ENCODE measurements at regions of chr19 and their contacts with region 1.

Region 1: DNA sequence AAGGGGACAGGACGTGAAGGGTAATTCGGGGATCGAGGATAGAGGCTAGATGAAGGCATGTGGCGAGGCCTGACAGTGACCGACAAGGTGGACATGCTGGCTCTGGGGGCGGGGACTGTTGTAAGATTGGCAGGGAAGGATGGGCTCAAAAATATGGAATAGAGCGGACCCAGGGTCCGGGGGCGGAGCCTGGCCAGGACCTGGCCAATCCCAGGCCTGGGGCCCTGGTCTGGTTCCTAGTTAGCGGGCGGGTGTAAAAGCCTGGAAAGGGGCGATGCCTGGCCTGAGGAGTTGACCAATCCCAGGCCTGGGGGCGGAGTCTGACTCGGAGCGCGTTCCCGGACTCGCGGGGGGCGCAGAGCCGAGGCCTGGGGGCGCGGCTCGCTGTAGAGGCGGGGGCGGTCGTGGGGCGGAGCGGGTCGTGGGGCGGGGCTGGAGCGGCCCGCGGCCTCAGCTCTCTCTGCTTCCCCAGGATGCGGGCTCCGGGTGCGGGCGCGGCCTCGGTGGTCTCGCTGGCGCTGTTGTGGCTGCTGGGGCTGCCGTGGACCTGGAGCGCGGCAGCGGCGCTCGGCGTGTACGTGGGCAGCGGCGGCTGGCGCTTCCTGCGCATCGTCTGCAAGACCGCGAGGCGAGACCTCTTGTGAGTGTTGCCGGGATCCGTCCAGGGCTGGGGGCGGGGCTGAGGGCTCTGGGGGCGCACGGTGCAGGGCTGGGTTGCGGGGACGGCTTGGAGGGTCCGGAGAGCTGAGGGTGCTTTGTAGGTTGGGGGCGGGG is at the start of gene SLC27A1:
- DNase-seq: peak; percentile 94
- ATAC-seq: peak; percentile 78
- H3K4me3 ChIP-seq: peak within 1 kb of the TSS; percentile 30 to 81 (median 76)
- H3K4me3 Mint-ChIP-seq: peak within 1 kb of the TSS; percentile 92
- H3K27ac ChIP-seq: peak within 1 kb of the TSS; percentile 59 to 62
- H3K27ac Mint-ChIP-seq: peak within 1 kb of the TSS; percentile 90
- H3K4me1 ChIP-seq: peaks cover 6 to 22% of the 10 kb centered on the region in 2 donors
- H3K4me1 Mint-ChIP-seq: peaks cover 28% of the 10 kb centered on the region
- H3K27me3 ChIP-seq: no peaks in the 10 kb centered on the region
- H3K27me3 Mint-ChIP-seq: no peaks in the 10 kb centered on the region
- CTCF ChIP-seq: no peak
- total RNA-seq, gene SLC27A1: 9.5 and 11.5 TPM in 2 replicates

Region 2: DNA sequence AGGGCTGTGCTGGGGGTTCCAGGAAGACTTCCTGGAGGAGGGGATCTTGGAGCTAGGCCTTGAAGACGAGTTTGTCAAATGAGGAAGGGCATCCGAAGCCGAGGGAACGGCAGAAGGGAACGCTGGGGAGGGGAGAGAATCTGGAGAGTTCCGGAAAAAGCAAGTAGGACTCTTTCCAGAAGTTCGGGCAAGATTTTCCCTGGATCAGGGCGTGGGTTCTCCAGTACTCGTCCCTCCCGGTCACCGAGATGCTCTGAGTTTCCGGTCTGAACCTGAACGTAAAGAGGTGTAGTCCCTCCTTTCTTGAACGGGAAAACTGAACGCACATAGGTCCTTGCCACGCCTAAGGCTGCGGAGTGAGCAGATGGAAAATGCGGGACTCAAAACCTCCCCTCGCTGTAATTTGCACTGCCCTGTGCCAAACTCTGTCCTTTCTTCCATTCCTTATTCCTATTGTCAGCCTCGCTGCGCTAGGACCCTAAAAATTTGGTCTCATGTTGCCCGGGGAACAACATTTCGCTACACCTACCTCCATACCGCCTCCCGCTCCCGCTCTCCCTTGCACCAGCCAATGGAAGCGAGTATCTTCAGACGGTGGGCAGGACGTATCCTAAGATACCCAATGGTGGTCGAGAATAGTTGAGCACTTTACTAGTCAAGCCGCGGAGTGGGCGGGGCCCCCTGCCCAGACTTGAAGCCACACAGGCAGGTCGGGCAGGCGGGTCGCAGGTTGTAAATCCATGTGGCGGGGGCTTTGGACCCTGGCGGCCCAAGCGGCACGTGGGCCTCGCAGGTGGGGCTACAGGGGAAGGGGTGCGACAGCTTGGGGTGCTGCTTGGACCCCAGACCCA is 133.2 kb before region 1 on chr19 and contains the start of gene GTPBP3:
- CTCF ChIA-PET with region 1: no interaction called
- POLR2A ChIA-PET with region 1: no interaction called
- intact Hi-C with region 1: loop called (anchors 1 kb)
- DNase-seq: peak; percentile 97
- ATAC-seq: peak; percentile 88
- H3K4me3 ChIP-seq: peak within 1 kb of the TSS; percentile 55 to 97 (median 85)
- H3K4me3 Mint-ChIP-seq: peak within 1 kb of the TSS; percentile 92
- H3K27ac ChIP-seq: peak within 1 kb of the TSS; percentile 39 to 85
- H3K27ac Mint-ChIP-seq: peak within 1 kb of the TSS; percentile 92
- H3K4me1 ChIP-seq: peaks cover 19 to 33% of the 10 kb centered on the region in 2 donors
- H3K4me1 Mint-ChIP-seq: peaks cover 40% of the 10 kb centered on the region
- H3K27me3 ChIP-seq: peaks cover 0 to 6% (median 0%) of the 10 kb centered on the region in 4 experiments
- H3K27me3 Mint-ChIP-seq: no peaks in the 10 kb centered on the region
- CTCF ChIP-seq: no peak
- total RNA-seq, gene GTPBP3: 44.3 and 44.9 TPM in 2 replicates

Region 3: DNA sequence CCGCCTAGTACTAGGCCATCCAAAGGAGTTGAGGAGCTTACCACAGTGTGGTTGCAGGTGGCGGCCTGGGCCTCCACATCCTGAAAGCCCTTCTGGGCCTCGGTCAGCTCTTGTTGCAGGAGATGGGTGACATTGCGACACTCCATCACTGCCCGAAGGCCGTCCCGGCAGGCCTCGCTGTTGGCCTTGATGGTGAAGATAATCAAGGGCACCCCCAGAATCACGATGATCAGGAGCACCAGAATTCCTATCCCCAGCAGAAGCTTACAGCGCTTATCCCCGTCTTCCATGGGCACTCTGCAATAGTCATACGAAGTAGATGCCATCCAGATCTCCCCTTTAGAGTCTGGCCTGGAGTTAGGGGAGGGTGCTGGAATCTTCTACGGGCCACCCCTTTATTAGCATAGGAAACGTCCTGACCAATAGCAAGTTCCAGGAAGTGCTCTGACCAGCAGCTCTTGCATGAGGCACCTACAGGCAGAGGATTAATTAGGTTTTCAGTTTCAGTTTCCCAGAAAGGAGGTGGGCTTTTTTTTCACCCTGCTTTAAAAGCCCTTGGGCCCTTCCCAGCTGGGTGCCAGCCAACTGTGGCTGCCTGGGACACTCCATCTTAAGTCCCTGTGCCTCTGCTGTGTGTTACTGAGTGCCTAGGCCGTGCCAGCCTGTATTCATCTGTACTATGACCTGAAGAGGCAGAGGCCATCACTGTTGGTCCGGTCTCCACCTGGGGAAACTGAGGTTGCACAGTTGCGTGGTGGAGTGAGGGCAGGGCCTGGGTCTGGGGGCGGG is 64.8 kb before region 1 on chr19 and contains the start of gene BST2:
- CTCF ChIA-PET with region 1: interaction called, 4 read pairs
- POLR2A ChIA-PET with region 1: interaction called, 10 read pairs
- intact Hi-C with region 1: loop called (anchors 1 kb)
- DNase-seq: peak; percentile 81
- ATAC-seq: peak; percentile 91
- H3K4me3 ChIP-seq: peak within 1 kb of the TSS; percentile 62 to 95 (median 75)
- H3K4me3 Mint-ChIP-seq: peak within 1 kb of the TSS; percentile 85
- H3K27ac ChIP-seq: peak within 1 kb of the TSS; percentile 72 to 86
- H3K27ac Mint-ChIP-seq: peak within 1 kb of the TSS; percentile 86
- H3K4me1 ChIP-seq: peaks cover 26 to 45% of the 10 kb centered on the region in 2 donors
- H3K4me1 Mint-ChIP-seq: peaks cover 42% of the 10 kb centered on the region
- H3K27me3 ChIP-seq: no peaks in the 10 kb centered on the region
- H3K27me3 Mint-ChIP-seq: no peaks in the 10 kb centered on the region
- CTCF ChIP-seq: no peak
- total RNA-seq, gene BST2: 59.7 and 66.0 TPM in 2 replicates

Region 4: DNA sequence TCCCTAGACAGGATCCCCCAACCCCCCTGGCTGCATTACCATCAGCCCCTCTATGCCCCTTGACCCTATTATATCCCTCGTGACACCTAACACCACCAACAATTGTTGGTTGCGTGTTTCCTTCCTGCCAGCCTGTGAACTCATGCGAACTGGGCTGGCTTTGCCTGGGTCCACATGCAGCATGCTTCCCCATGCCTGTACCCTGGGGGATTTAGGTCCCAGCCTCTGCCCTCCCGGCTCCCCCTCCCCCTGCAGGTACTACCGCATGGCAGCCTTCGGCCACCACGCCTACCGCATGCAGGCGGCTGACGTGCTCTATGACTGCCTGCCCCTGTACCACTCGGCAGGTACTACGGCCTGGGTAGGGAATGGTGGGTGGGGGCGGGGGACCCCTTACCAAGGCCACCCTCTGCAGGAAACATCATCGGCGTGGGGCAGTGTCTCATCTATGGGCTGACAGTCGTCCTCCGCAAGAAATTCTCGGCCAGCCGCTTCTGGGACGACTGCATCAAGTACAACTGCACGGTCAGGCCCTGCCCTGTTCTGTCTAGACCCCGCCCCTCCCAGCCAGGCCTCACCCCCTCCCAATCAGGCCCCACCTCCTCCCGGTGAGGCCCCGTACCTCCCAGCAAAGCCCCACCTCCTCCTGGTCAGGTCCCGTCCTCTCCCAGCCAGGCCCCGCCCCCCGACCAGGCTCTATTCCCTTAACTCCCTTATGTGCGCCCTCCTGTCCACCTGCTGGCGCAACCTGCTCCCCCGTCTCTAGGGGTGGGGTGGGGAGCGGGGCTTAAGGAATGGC is 18.5 kb after region 1 on chr19:
- CTCF ChIA-PET with region 1: interaction called, 3 read pairs
- POLR2A ChIA-PET with region 1: no interaction called
- intact Hi-C with region 1: loop called (anchors 1 kb)
- DNase-seq: peak; percentile 81
- ATAC-seq: peak; percentile 100
- H3K4me3 ChIP-seq: peak overlapping the region in 3 of 5 experiments; percentile 21 to 43 (median 42)
- H3K4me3 Mint-ChIP-seq: peak overlapping the region; percentile 73
- H3K27ac ChIP-seq: no peak overlapping the region
- H3K27ac Mint-ChIP-seq: peak overlapping the region; percentile 26
- H3K4me1 ChIP-seq: peaks cover 9 to 20% of the 10 kb centered on the region in 2 donors
- H3K4me1 Mint-ChIP-seq: peaks cover 13% of the 10 kb centered on the region
- H3K27me3 ChIP-seq: no peaks in the 10 kb centered on the region
- H3K27me3 Mint-ChIP-seq: no peaks in the 10 kb centered on the region
- CTCF ChIP-seq: no peak

Region 5: GRCh38 chr19:17539238-17540117 is 69.2 kb after region 1 on chr19:
- CTCF ChIA-PET with region 1: no interaction called
- POLR2A ChIA-PET with region 1: interaction called, 4 read pairs
- intact Hi-C with region 1: loop called (anchors 1 kb)
- DNase-seq: peak; percentile 99
- ATAC-seq: peak; percentile 92
- H3K4me3 ChIP-seq: peak overlapping the region in 4 of 5 experiments; percentile 14 to 53 (median 40)
- H3K4me3 Mint-ChIP-seq: peak overlapping the region; percentile 93
- H3K27ac ChIP-seq: peak overlapping the region; percentile 54 to 59
- H3K27ac Mint-ChIP-seq: peak overlapping the region; percentile 97
- H3K4me1 ChIP-seq: peaks cover 26 to 46% of the 10 kb centered on the region in 2 donors
- H3K4me1 Mint-ChIP-seq: peaks cover 54% of the 10 kb centered on the region
- H3K27me3 ChIP-seq: no peaks in the 10 kb centered on the region
- H3K27me3 Mint-ChIP-seq: no peaks in the 10 kb centered on the region
- CTCF ChIP-seq: no peak

Region 6: GRCh38 chr19:17605761-17606745 is 135.8 kb after region 1 on chr19:
- CTCF ChIA-PET with region 1: no interaction called
- POLR2A ChIA-PET with region 1: no interaction called
- intact Hi-C with region 1: loop called (anchors 1 kb)
- DNase-seq: peak; percentile 96
- ATAC-seq: peak; percentile 90
- H3K4me3 ChIP-seq: peak overlapping the region in 4 of 5 experiments; percentile 33 to 60 (median 46)
- H3K4me3 Mint-ChIP-seq: peak overlapping the region; percentile 85
- H3K27ac ChIP-seq: peak overlapping the region; percentile 18 to 44
- H3K27ac Mint-ChIP-seq: peak overlapping the region; percentile 72
- H3K4me1 ChIP-seq: peaks cover 11 to 12% of the 10 kb centered on the region in 2 donors
- H3K4me1 Mint-ChIP-seq: peaks cover 22% of the 10 kb centered on the region
- H3K27me3 ChIP-seq: peaks cover 0 to 33% (median 10%) of the 10 kb centered on the region in 4 experiments
- H3K27me3 Mint-ChIP-seq: peaks cover 32% of the 10 kb centered on the region
- CTCF ChIP-seq: peak; percentile 94

Measured in B cell (primary cell).